ENCODE measurements at regions of chr12 and their contacts with region 1.

Region 1: DNA sequence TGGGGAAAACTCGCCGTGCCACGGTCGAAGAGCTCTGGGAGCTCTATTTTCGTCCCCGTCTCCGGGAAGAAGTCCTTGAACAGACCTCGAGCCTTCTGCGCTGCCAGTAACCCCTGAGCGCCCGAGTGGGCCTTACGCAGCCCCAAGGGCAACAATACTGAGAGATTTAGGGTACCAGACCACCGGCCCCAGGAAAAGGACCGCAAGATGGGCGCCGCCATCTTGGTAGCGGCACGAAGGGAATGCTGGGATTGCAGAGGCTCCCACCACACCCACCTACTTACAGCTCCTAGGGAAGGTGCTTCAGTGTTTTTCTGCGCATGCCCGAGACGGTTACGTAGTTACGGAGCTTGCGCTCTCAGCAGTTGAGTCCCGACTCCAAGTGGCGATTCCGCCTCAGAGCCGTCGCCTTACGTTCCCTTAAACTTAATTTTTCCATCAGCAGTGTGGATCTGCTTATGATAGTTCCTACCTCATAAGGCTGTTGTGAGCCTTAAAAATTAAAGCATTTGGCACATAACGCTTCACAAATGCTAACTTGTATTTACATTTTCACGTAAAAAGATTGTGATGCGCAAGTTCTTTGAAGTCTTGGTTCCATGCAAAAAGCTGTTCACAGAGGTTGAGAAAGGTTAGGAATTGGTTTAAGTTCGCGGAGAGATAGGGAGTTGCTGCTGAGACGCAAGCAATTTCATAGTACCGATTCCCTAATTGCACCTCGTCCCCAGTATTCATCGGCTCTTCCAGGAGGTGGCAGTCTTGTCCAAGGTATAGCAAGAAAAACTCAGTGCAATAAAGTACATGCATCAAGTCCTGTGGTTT is at the start of gene YARS2:
- DNase-seq: peak; percentile 83 to 88 (median 86)
- H3K4me3 ChIP-seq: peak within 1 kb of the TSS; percentile 76 to 93
- H3K4me3 Mint-ChIP-seq: peak within 1 kb of the TSS; percentile 87 to 95 (median 95)
- H3K27ac ChIP-seq: peak within 1 kb of the TSS; percentile 78
- H3K27ac Mint-ChIP-seq: peak within 1 kb of the TSS; percentile 83 to 97 (median 95)
- H3K4me1 ChIP-seq: peaks cover 16% of the 10 kb centered on the region
- H3K4me1 Mint-ChIP-seq: peaks cover 11 to 22% (median 17%) of the 10 kb centered on the region in 4 donors
- H3K27me3 ChIP-seq: no peaks in the 10 kb centered on the region
- H3K27me3 Mint-ChIP-seq: peaks cover 0 to 2% of the 10 kb centered on the region in 2 donors
- total RNA-seq, gene YARS2: 18.9 to 19.0 TPM

Region 2: GRCh38 chr12:31406345-31406744 is 1349.5 kb before region 1 on chr12:
- CTCF ChIA-PET with region 1: interaction called, 8 read pairs
- POLR2A ChIA-PET with region 1: no interaction called
- intact Hi-C with region 1: loop called (anchors 5 kb)
- DNase-seq: no peak
- H3K4me3 ChIP-seq: no peak overlapping the region
- H3K4me3 Mint-ChIP-seq: no peak overlapping the region
- H3K27ac ChIP-seq: no peak overlapping the region
- H3K27ac Mint-ChIP-seq: no peak overlapping the region
- H3K4me1 ChIP-seq: no peaks in the 10 kb centered on the region
- H3K4me1 Mint-ChIP-seq: peaks cover 0 to 3% (median 0%) of the 10 kb centered on the region in 4 donors
- H3K27me3 ChIP-seq: no peaks in the 10 kb centered on the region
- H3K27me3 Mint-ChIP-seq: peaks cover 4 to 12% of the 10 kb centered on the region in 2 donors

Region 3: DNA sequence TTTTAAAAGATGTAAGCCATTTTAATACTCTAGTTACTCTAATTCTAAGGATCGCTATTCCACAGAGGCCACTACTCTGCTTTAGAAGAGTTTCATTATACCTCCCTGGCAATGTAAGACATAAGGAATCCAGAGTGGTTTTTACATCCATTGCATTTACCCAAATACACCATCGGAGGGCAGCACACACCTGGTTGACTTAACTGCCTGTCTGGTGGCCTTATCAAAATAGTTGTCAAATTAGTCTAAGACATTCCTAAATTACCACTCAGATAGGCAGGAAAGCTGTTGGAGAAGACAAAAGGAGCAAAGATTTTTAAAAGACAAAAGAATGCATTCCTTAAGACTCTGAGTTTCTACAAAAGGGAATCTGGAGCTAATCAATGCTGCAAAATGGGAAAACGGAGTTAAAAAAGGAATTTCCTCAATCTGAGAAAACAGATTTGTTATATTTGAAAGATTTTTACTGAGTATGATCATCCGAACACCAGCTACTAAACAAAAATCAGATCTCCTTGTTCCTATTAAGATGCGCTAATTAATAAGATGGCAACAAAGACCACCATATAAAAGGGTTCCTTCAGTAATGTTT is 390.3 kb before region 1 on chr12:
- CTCF ChIA-PET with region 1: interaction called, 5 read pairs
- POLR2A ChIA-PET with region 1: no interaction called
- intact Hi-C with region 1: loop called (anchors 2 kb)
- DNase-seq: peak; percentile 18 to 40 (median 34)
- H3K4me3 ChIP-seq: no peak overlapping the region
- H3K4me3 Mint-ChIP-seq: no peak overlapping the region
- H3K27ac ChIP-seq: no peak overlapping the region
- H3K27ac Mint-ChIP-seq: peak overlapping the region in 1 of 7 donors; percentile 48
- H3K4me1 ChIP-seq: no peaks in the 10 kb centered on the region
- H3K4me1 Mint-ChIP-seq: no peaks in the 10 kb centered on the region
- H3K27me3 ChIP-seq: no peaks in the 10 kb centered on the region
- H3K27me3 Mint-ChIP-seq: no peaks in the 10 kb centered on the region

Region 4: GRCh38 chr12:32679091-32679919 is 76.6 kb before region 1 on chr12 and contains the start of gene DNM1L:
- CTCF ChIA-PET with region 1: interaction called, 21 read pairs
- POLR2A ChIA-PET with region 1: interaction called, 14 read pairs
- intact Hi-C with region 1: loop called (anchors 1 kb)
- DNase-seq: peak; percentile 91 to 95 (median 93)
- H3K4me3 ChIP-seq: peak within 1 kb of the TSS; percentile 65 to 69
- H3K4me3 Mint-ChIP-seq: peak within 1 kb of the TSS; percentile 89 to 97 (median 94)
- H3K27ac ChIP-seq: peak within 1 kb of the TSS; percentile 87
- H3K27ac Mint-ChIP-seq: peak within 1 kb of the TSS; percentile 80 to 97 (median 94)
- H3K4me1 ChIP-seq: peaks cover 18% of the 10 kb centered on the region
- H3K4me1 Mint-ChIP-seq: peaks cover 14 to 37% (median 27%) of the 10 kb centered on the region in 4 donors
- H3K27me3 ChIP-seq: no peaks in the 10 kb centered on the region
- H3K27me3 Mint-ChIP-seq: no peaks in the 10 kb centered on the region
- total RNA-seq, gene DNM1L: 42.7 to 50.1 TPM

Region 5: GRCh38 chr12:32743264-32743663 is 12.6 kb before region 1 on chr12:
- CTCF ChIA-PET with region 1: interaction called, 37 read pairs
- POLR2A ChIA-PET with region 1: interaction called, 4 read pairs
- intact Hi-C with region 1: no loop called
- DNase-seq: no peak
- H3K4me3 ChIP-seq: no peak overlapping the region
- H3K4me3 Mint-ChIP-seq: no peak overlapping the region
- H3K27ac ChIP-seq: no peak overlapping the region
- H3K27ac Mint-ChIP-seq: no peak overlapping the region
- H3K4me1 ChIP-seq: no peaks in the 10 kb centered on the region
- H3K4me1 Mint-ChIP-seq: peaks cover 8 to 14% (median 11%) of the 10 kb centered on the region in 4 donors
- H3K27me3 ChIP-seq: no peaks in the 10 kb centered on the region
- H3K27me3 Mint-ChIP-seq: no peaks in the 10 kb centered on the region

Region 6: GRCh38 chr12:34033628-34034282 is 1277.9 kb after region 1 on chr12:
- CTCF ChIA-PET with region 1: interaction called, 21 read pairs
- POLR2A ChIA-PET with region 1: no interaction called
- intact Hi-C with region 1: no loop called
- DNase-seq: peak in 4 of 5 donors; percentile 24 to 41 (median 31)
- H3K4me3 ChIP-seq: no peak overlapping the region
- H3K4me3 Mint-ChIP-seq: no peak overlapping the region
- H3K27ac ChIP-seq: no peak overlapping the region
- H3K27ac Mint-ChIP-seq: no peak overlapping the region
- H3K4me1 ChIP-seq: no peaks in the 10 kb centered on the region
- H3K4me1 Mint-ChIP-seq: no peaks in the 10 kb centered on the region
- H3K27me3 ChIP-seq: no peaks in the 10 kb centered on the region
- H3K27me3 Mint-ChIP-seq: no peaks in the 10 kb centered on the region